Activated T-helper 1 cell treated with anti-CD3 and anti-CD28 coated beads, Interleukin-12 subunit alpha, Interleukin-12 subunit beta, Interleukin-2, Interleukin-4 antibody, amounts not matched to agents 30 ng/mL and 10 ng/mL and 1 ng/mL, durations not matched to agents 14 hours and 24 hours and 36 hours (primary cell): ENCODE measurements at regions of chr3 and their contacts with region 1.

Region 1: DNA sequence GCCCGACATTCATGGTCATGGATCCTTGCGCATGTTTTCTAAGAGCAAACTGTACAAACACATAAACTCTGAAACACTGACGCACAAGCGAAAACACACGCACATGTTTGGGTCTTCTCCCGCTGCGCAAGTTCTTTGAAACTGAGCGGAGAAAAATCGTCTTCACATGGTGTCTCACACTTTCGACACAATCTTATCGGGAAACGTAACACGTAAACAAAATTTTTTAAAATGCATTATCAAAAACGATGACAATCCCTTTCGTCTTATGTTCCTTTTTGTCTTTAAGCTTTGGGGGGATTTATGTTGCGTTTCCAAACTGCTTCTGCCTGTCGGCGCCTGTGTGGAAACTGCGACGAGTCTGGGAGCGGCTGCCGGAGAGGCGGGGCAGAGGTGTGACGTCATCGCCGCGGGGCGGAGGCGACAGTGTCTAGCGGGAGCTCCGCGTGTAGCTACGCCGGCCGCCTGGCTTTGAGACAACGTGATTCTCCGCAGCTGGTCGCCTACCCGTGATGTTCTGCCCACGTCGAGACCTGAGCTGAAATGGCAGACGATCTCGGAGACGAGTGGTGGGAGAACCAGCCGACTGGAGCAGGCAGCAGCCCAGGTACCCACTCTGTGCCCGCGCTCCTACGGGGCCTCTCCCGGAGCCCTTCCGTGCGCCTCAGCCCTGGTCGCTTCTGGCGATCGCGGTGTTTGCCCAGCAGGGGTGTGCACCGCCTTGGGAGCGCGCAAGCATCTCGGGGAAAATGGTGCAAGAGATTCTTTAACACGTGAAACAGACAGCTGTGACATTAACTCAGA is at the start of gene CMSS1:
- DNase-seq: peak; percentile 92
- H3K4me3 Mint-ChIP-seq: peak within 1 kb of the TSS; percentile 88
- H3K27ac Mint-ChIP-seq: peak within 1 kb of the TSS; percentile 90
- H3K4me1 Mint-ChIP-seq: peaks cover 35% of the 10 kb centered on the region
- H3K27me3 Mint-ChIP-seq: no peaks in the 10 kb centered on the region
- total RNA-seq, gene CMSS1: 108 and 121 TPM in 2 replicates

Region 2: GRCh38 chr3:99720985-99721632 is 96.5 kb before region 1 on chr3:
- intact Hi-C with region 1: no loop called
- DNase-seq: no peak
- H3K4me3 Mint-ChIP-seq: no peak overlapping the region
- H3K27ac Mint-ChIP-seq: no peak overlapping the region
- H3K4me1 Mint-ChIP-seq: no peaks in the 10 kb centered on the region
- H3K27me3 Mint-ChIP-seq: peaks cover 5% of the 10 kb centered on the region

Region 3: GRCh38 chr3:99833617-99834205 is 16.1 kb after region 1 on chr3:
- intact Hi-C with region 1: loop called (anchors 1 kb)
- DNase-seq: no peak
- H3K4me3 Mint-ChIP-seq: no peak overlapping the region
- H3K27ac Mint-ChIP-seq: no peak overlapping the region
- H3K4me1 Mint-ChIP-seq: peaks cover 12% of the 10 kb centered on the region
- H3K27me3 Mint-ChIP-seq: no peaks in the 10 kb centered on the region

Region 4: GRCh38 chr3:100245927-100246326 is 428.3 kb after region 1 on chr3:
- intact Hi-C with region 1: no loop called
- DNase-seq: no peak
- H3K4me3 Mint-ChIP-seq: no peak overlapping the region
- H3K27ac Mint-ChIP-seq: no peak overlapping the region
- H3K4me1 Mint-ChIP-seq: peaks cover 4% of the 10 kb centered on the region
- H3K27me3 Mint-ChIP-seq: peaks cover 2% of the 10 kb centered on the region

Region 5: GRCh38 chr3:100260685-100261484 is 443.2 kb after region 1 on chr3 and contains the start of gene TBC1D23:
- intact Hi-C with region 1: loop called (anchors 1 kb)
- DNase-seq: peak; percentile 97
- H3K4me3 Mint-ChIP-seq: peak within 1 kb of the TSS; percentile 92
- H3K27ac Mint-ChIP-seq: peak within 1 kb of the TSS; percentile 97
- H3K4me1 Mint-ChIP-seq: peaks cover 38% of the 10 kb centered on the region
- H3K27me3 Mint-ChIP-seq: no peaks in the 10 kb centered on the region
- total RNA-seq, gene TBC1D23: 18.3 and 19.0 TPM in 2 replicates

Region 6: DNA sequence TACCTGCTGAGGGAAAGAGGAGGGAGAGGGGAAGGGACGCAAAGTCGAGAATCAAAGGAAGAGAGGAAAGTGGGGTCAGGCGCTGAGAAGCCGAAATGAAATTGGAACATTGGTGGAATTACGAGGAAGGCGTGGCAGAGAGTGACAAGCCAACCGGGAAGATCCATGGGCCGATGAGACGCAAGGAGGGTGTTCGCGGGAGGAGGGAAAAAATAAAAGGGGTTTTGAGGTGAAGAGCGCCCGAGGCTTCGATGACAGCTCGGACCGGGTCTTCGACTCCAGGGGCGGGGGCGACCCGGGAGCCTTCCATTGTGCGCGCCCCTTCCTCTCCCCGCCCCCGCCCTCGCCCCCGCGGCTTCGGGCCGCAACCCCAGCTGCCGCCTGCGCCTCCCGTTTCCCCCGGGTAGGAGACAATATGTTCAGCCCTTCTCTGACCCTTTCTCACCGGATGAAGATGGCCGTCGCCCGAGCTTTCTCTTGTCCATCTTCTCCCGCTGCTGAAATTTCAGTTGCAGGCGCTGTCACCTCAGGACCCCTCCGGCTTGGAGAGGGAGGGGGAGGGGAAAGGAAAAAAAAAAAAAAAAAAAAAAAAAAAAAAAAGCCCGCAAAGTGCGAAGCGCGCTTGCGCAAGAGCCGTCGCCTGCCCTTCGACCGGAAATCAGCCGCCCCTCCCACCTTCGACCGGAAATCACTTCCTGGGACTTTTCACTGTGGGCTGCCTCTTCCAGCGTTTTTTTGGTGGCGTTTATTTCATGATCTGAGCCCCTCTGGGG is 1695.2 kb after region 1 on chr3 and contains the start of gene SENP7:
- intact Hi-C with region 1: loop called (anchors 10 kb)
- DNase-seq: peak; percentile 72
- H3K4me3 Mint-ChIP-seq: peak within 1 kb of the TSS; percentile 94
- H3K27ac Mint-ChIP-seq: peak within 1 kb of the TSS; percentile 95
- H3K4me1 Mint-ChIP-seq: peaks cover 31% of the 10 kb centered on the region
- H3K27me3 Mint-ChIP-seq: no peaks in the 10 kb centered on the region
- total RNA-seq, gene SENP7: 9.1 and 10.7 TPM in 2 replicates

Region 7: GRCh38 chr3:101724329-101725193 is 1906.9 kb after region 1 on chr3 and contains the start of gene CEP97:
- intact Hi-C with region 1: loop called (anchors 5 kb)
- DNase-seq: peak; percentile 85
- H3K4me3 Mint-ChIP-seq: peak within 1 kb of the TSS; percentile 94
- H3K27ac Mint-ChIP-seq: peak within 1 kb of the TSS; percentile 96
- H3K4me1 Mint-ChIP-seq: peaks cover 54% of the 10 kb centered on the region
- H3K27me3 Mint-ChIP-seq: no peaks in the 10 kb centered on the region
- total RNA-seq, gene CEP97: 20.2 and 20.6 TPM in 2 replicates